ENCODE measurements at regions of chr3 and their contacts with region 1.

Region 1: DNA sequence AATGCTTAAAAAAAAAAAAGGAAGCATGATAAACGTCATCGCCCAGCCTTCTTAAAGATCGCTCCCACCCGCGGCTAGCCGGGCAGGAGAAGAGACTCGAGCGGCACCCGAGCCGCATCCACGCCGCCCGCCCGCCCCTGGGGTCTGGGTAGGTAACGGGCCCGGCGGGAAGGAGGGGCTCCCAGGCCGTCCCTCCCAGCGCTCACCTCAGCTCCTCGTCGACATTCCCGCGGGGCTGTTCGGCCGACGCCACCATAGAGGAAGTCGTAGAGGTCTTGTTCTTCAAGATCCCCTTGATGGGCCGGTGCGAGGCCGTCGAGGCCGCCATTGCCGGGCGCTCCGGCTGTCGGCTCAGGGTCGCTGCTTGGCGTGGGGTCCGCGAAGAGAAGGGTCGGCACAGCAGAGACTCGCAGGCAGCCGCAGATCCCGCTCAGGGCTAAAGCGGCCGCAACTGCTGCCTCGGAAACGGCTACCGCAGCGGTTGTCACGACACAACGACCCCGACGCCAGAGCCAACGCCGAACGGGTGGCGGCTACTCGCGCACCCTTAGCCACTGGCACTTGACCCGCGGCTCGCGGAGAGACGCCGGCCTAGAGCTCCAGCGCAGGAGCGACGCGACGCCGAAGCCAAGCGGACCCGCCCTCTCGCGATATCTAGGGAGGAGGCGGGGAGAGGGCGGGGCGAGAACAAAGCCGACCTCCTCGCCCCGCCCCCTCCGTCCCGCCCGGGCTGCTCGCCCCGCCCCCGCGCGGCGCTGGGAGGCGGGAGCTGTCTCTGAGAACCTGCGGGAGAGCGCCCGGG is at the start of gene PPP1R2:
- DNase-seq: peak; percentile 93
- H3K4me3 Mint-ChIP-seq: peak within 1 kb of the TSS; percentile 88
- H3K27ac Mint-ChIP-seq: peak within 1 kb of the TSS; percentile 94
- H3K4me1 Mint-ChIP-seq: peaks cover 53% of the 10 kb centered on the region
- H3K27me3 Mint-ChIP-seq: no peaks in the 10 kb centered on the region
- total RNA-seq, gene PPP1R2: 99.7 to 105 TPM

Region 2: GRCh38 chr3:195407531-195408409 is 135.1 kb before region 1 on chr3:
- CTCF ChIA-PET with region 1: no interaction called
- intact Hi-C with region 1: loop called (anchors 5 kb)
- DNase-seq: no peak
- H3K4me3 Mint-ChIP-seq: peak overlapping the region; percentile 28
- H3K27ac Mint-ChIP-seq: no peak overlapping the region
- H3K4me1 Mint-ChIP-seq: peaks cover 47% of the 10 kb centered on the region
- H3K27me3 Mint-ChIP-seq: no peaks in the 10 kb centered on the region

Region 3: GRCh38 chr3:195522254-195523023 is 20.5 kb before region 1 on chr3:
- CTCF ChIA-PET with region 1: interaction called, 24 read pairs
- intact Hi-C with region 1: loop called (anchors 1 kb)
- DNase-seq: no peak
- H3K4me3 Mint-ChIP-seq: no peak overlapping the region
- H3K27ac Mint-ChIP-seq: peak overlapping the region; percentile 69
- H3K4me1 Mint-ChIP-seq: peaks cover 50% of the 10 kb centered on the region
- H3K27me3 Mint-ChIP-seq: no peaks in the 10 kb centered on the region

Region 4: DNA sequence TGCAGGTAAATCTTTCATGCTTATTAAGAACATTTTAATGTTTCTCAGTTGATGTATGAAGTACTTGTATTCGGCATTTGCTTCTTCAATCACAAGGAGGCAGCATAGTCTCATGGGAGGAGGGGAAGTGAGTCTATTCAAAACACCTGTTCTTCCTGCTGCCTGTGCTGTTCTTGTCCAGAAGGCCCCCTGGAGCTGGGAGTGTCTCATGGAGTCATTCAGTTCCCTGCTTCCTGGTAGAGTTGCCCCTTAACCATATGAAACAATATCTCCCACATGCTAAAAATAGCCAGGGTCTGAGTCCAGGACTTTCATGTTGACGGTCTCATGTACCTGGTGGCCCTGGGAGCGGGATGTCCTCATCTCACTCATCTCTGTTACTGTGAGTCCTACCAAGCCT is 15.7 kb after region 1 on chr3:
- CTCF ChIA-PET with region 1: interaction called, 16 read pairs
- intact Hi-C with region 1: loop called (anchors 1 kb)
- DNase-seq: peak; percentile 67
- H3K4me3 Mint-ChIP-seq: no peak overlapping the region
- H3K27ac Mint-ChIP-seq: no peak overlapping the region
- H3K4me1 Mint-ChIP-seq: peaks cover 37% of the 10 kb centered on the region
- H3K27me3 Mint-ChIP-seq: no peaks in the 10 kb centered on the region